ENCODE measurements at regions of chr9 and their contacts with region 1.

Region 1: GRCh38 chr9:121321016-121321503 is 49.0 kb downstream of the STOM start:
- DNase-seq: peak in 1 of 2 experiments; percentile 36
- ATAC-seq: no peak
- H3K4me3 ChIP-seq: no peak overlapping the region
- H3K27ac ChIP-seq: peak overlapping the region; percentile 81 to 92
- H3K4me1 ChIP-seq: peaks cover 67% of the 10 kb centered on the region
- CTCF ChIP-seq: no peak
- EP300 ChIP-seq: no peak
- POLR2A ChIP-seq: no peak
- RAD21 ChIP-seq: no peak

Region 2: DNA sequence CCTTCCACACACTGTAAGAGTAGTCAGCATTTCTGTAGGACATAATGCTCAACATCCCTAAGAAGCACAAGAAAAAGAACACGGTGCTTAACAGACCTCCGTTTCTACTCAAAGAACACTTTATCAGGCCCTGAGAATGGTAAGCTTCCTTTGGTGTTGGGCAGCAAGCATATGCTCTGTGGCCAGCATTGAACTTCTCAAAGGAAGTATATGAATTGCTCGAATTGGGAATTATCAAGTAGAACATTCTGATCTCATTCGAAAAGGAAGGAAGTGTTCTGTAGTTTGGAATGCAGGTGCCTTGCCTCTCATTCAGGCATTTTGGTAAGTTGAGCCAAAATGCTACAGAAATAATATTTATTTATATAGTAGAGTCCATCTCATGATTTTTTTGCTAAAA is 332.0 kb before region 1 on chr9:
- CTCF ChIA-PET with region 1: no interaction called
- POLR2A ChIA-PET with region 1: no interaction called
- DNase-seq: no peak
- ATAC-seq: no peak
- H3K4me3 ChIP-seq: no peak overlapping the region
- H3K27ac ChIP-seq: no peak overlapping the region
- H3K4me1 ChIP-seq: peaks cover 5% of the 10 kb centered on the region; the same call in 2 of the 3 replicates
- CTCF ChIP-seq: no peak
- EP300 ChIP-seq: no peak
- POLR2A ChIP-seq: no peak
- RAD21 ChIP-seq: no peak

Region 3: DNA sequence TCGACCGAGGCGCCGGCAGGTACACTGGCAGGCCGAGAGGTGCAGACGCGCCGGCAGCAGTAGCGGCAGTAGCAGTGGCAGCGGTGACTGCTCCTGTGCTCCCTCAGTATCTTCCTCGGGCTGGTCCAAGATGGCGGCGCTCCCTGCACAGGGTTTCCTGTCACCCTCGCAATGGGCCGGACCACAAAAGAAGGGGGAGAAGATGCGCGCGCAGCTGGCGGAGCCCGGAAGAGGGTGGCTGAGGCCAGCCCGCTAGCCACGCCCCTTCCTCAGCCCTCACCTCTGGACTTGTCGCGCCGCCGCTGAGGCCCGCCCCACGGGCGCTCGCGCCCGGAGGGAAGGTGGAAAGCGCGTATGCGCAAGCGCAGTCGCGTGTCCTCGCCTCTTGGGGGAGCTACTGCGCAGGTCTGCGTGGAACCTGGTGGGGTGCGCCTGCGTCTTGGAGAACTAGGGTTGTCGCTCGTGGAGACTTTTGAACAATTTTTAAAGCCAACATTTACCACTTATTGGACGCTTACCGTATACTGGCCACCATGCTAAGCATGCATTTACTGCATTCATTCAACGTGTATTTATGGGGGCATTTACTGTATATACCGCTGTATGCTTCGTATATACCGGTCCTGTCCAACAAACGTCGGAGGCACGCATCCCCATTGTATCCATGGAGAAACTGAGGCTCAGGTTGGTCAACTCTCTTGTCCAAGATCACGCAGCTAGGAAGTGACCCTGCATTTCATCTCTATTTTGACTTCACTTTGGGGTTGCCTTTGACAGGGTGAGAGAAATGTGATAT is 119.1 kb before region 1 on chr9 and contains the start of gene RAB14:
- CTCF ChIA-PET with region 1: interaction called, 174 read pairs
- POLR2A ChIA-PET with region 1: no interaction called
- DNase-seq: peak; percentile 98 to 99
- ATAC-seq: peak; percentile 93 to 96
- H3K4me3 ChIP-seq: peak within 1 kb of the TSS; percentile 89
- H3K27ac ChIP-seq: peak within 1 kb of the TSS; percentile 88 to 97
- H3K4me1 ChIP-seq: peaks cover 34% of the 10 kb centered on the region
- CTCF ChIP-seq: peak; percentile 53
- EP300 ChIP-seq: no peak
- POLR2A ChIP-seq: peak; percentile 71
- RAD21 ChIP-seq: 0 out of 5 replicates have a peak, but pooled peaks of 1 of the 2 experiments have one; percentile 14
- polyA plus RNA-seq, gene RAB14: 54.1 and 55.7 TPM in 2 replicates

Region 4: DNA sequence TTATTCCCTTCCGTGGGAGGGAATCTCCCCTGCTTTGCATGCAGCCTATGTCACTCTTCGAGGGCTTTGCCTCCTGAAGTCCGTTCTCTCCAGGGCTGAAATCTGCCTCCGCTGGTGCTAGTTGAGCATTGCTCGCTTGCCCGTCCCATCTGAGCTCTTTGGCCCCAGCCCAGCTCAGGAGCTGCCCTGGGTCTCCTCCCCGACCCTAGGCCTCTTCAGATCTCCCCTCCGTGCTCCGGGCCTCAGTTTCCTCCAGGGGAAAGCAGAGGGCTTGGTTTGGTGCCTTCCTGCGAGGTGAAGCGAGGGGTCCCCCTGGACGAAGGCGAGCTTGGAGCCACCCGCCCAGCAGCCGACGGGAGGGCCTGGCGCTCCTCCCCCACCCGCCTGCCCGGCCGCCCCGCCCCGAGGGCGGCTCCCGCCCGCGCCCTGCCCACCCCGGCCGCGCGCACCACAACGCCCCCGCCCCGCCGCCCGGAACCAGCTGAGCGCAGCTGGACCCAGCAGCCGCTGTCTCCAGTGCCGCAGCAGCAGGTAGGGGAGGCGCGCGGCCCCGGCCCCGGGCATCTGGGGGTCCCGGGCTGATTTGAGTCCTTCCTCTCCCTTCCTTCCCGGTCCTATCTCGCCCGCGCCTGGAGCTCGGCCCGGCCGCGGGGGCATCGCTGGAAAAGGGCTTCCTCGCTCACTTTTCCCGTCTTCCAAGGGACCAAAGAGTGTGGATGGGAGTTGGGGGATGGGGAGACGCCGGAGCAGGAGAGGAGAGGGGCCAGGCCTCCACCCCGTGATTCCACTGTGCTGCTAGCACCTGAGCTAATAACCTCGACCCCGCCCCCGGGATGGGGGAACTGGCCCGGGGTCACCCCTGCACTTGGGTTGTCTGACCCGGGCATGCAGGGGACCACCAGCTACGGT is 53.1 kb before region 1 on chr9 and contains the start of gene GSN:
- CTCF ChIA-PET with region 1: interaction called, 51 read pairs
- POLR2A ChIA-PET with region 1: no interaction called
- DNase-seq: peak; percentile 62 to 69
- ATAC-seq: peak; percentile 89 to 92
- H3K4me3 ChIP-seq: peak within 1 kb of the TSS; percentile 95
- H3K27ac ChIP-seq: peak within 1 kb of the TSS; percentile 80 to 92
- H3K4me1 ChIP-seq: peaks cover 28% of the 10 kb centered on the region
- CTCF ChIP-seq: no peak
- EP300 ChIP-seq: no peak
- POLR2A ChIP-seq: peak; percentile 91
- RAD21 ChIP-seq: no peak; a peak in 1 of 5 replicates
- polyA plus RNA-seq, gene GSN: 77.2 and 88.5 TPM in 2 replicates

Region 5: GRCh38 chr9:121299467-121300234 is 21.4 kb before region 1 on chr9:
- CTCF ChIA-PET with region 1: interaction called, 127 read pairs
- POLR2A ChIA-PET with region 1: no interaction called
- DNase-seq: no peak
- ATAC-seq: peak; percentile 60 to 65; a peak in 5 of 6 replicates
- H3K4me3 ChIP-seq: peak overlapping the region; percentile 60
- H3K27ac ChIP-seq: peak overlapping the region; percentile 68 to 84
- H3K4me1 ChIP-seq: peaks cover 38% of the 10 kb centered on the region
- CTCF ChIP-seq: no peak; the same call in 2 of the 3 replicates
- EP300 ChIP-seq: no peak
- POLR2A ChIP-seq: no peak
- RAD21 ChIP-seq: no peak

Region 6: GRCh38 chr9:121350993-121351561 is 30.0 kb after region 1 on chr9:
- CTCF ChIA-PET with region 1: interaction called, 53 read pairs
- POLR2A ChIA-PET with region 1: no interaction called
- DNase-seq: peak in 1 of 2 experiments; percentile 60
- ATAC-seq: peak; percentile 41 to 65; a peak in 3 of 6 replicates
- H3K4me3 ChIP-seq: no peak overlapping the region
- H3K27ac ChIP-seq: peak overlapping the region; percentile 12 to 55; a peak in 3 of 6 replicates
- H3K4me1 ChIP-seq: peaks cover 22% of the 10 kb centered on the region
- CTCF ChIP-seq: no peak
- EP300 ChIP-seq: no peak
- POLR2A ChIP-seq: no peak
- RAD21 ChIP-seq: no peak

Region 7: DNA sequence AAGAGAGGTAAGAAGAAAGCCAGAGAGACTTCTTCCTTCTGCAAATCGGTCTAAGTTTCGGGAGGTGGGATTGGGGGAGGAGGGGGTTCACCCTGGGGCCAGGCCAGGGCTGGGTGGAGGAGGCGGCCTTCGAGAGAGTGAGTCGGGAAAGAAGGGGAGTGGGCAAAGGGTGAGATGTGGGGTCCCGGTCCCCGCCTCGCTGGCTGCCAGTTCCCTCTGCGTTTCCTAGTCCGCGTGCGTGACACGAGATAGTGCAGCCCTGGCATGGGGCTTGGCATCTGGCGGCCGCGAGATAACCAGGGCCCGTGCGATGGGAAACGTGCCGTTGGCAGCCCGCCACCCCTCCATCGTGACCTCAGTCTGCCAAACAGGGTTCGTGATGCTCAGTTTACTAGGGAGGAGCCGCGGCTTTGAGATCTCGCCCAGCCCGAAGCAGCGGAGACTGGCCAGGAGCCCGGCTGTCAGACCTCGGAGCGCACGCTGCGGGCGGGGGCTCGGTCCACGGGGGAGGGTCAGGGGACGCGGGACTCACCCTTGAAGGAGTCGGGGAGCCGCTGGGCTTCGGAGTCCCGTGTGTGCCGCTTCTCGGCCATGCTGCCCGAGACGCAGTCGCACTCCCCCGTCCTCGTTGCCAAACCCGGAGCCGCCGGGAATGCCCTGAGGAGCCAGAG is 48.7 kb after region 1 on chr9 and contains the start of gene STOM:
- CTCF ChIA-PET with region 1: interaction called, 301 read pairs
- POLR2A ChIA-PET with region 1: interaction called, 3 read pairs
- DNase-seq: peak in 1 of 2 experiments; percentile 47
- ATAC-seq: peak; percentile 60 to 77
- H3K4me3 ChIP-seq: peak within 1 kb of the TSS; percentile 74
- H3K27ac ChIP-seq: peak within 1 kb of the TSS; percentile 92 to 94
- H3K4me1 ChIP-seq: peaks cover 85% of the 10 kb centered on the region
- CTCF ChIP-seq: no peak
- EP300 ChIP-seq: no peak
- POLR2A ChIP-seq: peak; percentile 97
- RAD21 ChIP-seq: 0 out of 5 replicates have a peak, but pooled peaks of 1 of the 2 experiments have one; percentile 12
- polyA plus RNA-seq, gene STOM: 234 and 246 TPM in 2 replicates

Region 8: DNA sequence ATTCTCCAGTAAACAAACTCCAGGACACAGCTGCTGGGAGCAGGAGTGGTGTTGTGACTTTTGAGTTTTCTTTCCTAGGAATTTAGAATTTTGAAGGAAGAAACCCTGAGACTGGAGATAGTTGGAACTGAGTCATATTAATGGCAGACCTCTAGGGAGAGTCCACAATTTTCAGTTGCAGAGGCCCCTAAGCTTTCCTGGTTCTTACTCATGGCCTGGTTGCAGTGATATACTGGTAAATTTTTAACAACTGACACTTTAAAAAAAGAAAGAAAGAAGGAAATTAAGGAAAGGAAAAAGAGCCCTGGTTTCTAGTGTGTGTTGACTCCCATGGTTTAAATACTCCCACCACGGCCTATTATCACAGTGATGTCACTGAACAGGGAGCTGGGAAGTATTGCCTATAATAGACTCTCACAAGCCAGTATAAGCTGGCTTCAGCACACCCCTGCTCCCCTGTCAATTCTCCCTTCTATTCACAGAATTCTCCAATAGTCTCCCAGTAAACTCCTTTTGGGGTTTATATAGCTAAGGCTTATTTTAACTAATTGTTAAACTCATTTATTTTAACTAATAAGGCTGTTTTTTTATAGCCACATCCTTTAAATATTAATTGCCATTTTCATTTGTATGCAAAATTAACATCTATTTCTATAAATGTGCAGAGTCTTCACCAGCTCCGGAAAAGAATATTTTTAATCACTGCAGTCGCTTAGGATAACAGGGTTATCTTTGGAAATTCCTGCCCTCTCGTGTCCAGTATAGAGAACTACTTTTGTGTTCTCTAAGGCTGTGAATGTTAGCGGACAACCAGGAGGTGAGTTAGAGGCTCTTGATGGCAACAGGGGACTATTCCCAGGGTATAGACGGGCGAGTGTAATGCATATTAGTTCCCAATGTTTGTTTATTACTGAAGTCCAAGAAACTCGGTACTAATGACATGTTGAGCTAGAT is 118.9 kb after region 1 on chr9:
- CTCF ChIA-PET with region 1: interaction called, 45 read pairs
- POLR2A ChIA-PET with region 1: no interaction called
- DNase-seq: peak; percentile 49 to 70
- ATAC-seq: peak; percentile 92 to 97
- H3K4me3 ChIP-seq: no peak overlapping the region
- H3K27ac ChIP-seq: no peak overlapping the region
- H3K4me1 ChIP-seq: no peaks in the 10 kb centered on the region
- CTCF ChIP-seq: peak; percentile 40
- EP300 ChIP-seq: no peak
- POLR2A ChIP-seq: no peak
- RAD21 ChIP-seq: peak; percentile 33 to 41; a peak in 2 of 5 replicates